Mammary epithelial cell (primary cell): ENCODE measurements at regions of chr19 and their contacts with region 1.

Region 1: GRCh38 chr19:39270036-39270871 is 2.1 kb downstream of the IFNL2 start:
- DNase-seq: no peak
- H3K4me3 ChIP-seq: no peak overlapping the region
- H3K27ac ChIP-seq: no peak overlapping the region
- H3K4me1 ChIP-seq: no peaks in the 10 kb centered on the region
- H3K27me3 ChIP-seq: peaks cover 6% of the 10 kb centered on the region
- CTCF ChIP-seq: no peak

Region 2: DNA sequence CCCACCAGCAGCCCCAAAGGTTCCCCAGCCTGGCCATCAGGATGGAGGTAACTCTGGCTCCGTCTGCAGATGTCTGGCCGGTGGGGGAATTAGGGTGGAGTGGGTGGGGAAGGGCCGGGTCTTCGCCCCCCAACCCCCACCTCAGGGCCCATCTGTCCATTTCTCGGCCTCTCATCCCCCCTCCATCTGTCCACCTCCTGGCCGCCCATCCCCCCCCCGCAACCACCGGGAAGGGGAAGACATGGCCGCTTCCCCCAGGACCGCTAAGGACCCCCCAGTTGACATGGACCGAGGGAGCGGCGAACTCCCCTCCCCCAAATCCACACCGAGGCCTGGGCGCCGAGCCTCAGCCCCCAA is 49.6 kb after region 1 on chr19:
- CTCF ChIA-PET with region 1: no interaction called
- dilution Hi-C with region 1: no loop called
- in situ Hi-C with region 1: loop called in 1 of 2 experiments (anchors 5 kb)
- intact Hi-C with region 1: no loop called
- DNase-seq: no peak
- H3K4me3 ChIP-seq: peak overlapping the region in 2 of 3 experiments; percentile 47 to 57
- H3K27ac ChIP-seq: no peak overlapping the region
- H3K4me1 ChIP-seq: peaks cover 5% of the 10 kb centered on the region
- H3K27me3 ChIP-seq: peaks cover 3% of the 10 kb centered on the region
- CTCF ChIP-seq: no peak